IMR-90 (cell line): ENCODE measurements at regions of chr1 and their contacts with region 1.

Region 1: DNA sequence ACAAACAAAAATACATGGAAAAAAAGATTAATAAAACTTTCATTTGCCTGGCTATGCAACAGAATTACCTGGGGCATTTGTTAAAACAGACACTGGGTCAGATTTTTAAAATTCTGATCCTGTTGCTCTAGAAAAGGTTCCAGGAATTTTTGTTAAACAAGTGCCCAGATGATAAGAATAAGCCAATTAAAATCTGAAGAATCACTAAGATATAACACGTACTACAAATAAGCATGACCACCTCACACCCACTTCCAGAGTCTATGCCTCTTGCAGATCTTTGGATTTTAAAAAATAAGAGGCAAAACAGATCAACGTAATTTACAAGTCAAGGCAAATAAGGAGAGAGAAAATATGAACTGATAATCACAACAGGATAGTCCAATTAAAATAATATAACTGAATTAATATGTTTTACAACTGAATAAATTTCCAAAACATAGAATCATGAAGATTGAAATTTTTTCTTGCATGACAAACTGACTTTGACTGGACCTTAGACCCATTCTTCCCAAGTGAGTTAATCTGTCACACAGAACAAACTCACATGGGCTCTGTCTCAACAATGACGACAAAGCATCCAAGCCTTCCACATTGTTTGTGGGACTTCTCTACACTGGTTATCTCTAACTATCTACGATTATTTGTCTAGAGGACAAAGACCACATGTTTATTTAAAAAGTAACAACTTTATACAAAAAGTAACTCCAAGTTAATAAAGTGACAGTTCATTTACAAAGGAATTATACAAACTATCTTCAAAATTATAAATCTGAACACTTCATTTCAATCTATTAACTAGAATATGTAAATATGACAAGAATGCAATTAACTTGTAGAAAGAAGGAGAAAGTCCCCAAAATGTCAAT is 56.9 kb downstream of the COP1 start:
- DNase-seq: no peak
- ATAC-seq: no peak
- H3K4me3 ChIP-seq: no peak overlapping the region
- H3K27ac ChIP-seq: no peak overlapping the region
- H3K4me1 ChIP-seq: no peaks in the 10 kb centered on the region
- H3K27me3 ChIP-seq: no peaks in the 10 kb centered on the region
- CTCF ChIP-seq: no peak
- POLR2A ChIP-seq: no peak
- RAD21 ChIP-seq: no peak

Region 2: DNA sequence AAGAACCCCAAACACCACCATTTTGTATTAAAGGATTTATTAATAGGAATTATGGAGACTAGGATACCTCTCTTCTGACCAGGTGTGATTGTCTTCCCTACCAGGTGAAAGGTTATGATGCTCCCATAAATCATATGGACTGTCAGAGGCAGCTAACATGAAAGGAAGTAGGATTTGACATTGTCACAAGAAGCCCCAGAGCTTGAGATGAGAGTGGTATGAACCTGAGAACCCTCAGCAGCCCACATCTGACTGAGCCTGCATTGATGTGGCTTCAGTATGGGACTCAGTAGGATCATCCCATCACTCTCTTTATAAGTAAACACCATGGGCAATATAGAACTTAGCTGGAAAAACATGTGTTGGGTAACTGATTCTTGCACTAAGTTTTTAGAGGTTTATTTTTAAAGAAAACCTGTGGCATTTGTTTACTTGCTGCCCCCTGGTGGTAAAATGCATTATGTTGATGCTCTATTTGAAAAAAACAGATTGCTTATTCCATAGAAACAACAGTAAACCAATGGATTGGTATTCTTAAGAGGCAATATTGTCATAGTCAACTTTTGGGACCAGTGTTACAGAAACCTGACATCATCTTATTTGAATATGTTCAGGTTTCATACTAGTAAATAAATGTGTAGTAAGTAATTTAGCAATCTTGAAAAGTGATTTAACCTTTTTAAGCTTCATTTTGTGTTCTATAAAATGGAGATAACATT is 1167.0 kb before region 1 on chr1:
- CTCF ChIA-PET with region 1: no interaction called
- POLR2A ChIA-PET with region 1: no interaction called
- dilution Hi-C with region 1: no loop called
- in situ Hi-C with region 1: no loop called
- intact Hi-C with region 1: no loop called
- DNase-seq: peak; percentile 49
- ATAC-seq: peak; percentile 32
- H3K4me3 ChIP-seq: no peak overlapping the region
- H3K27ac ChIP-seq: no peak overlapping the region
- H3K4me1 ChIP-seq: no peaks in the 10 kb centered on the region
- H3K27me3 ChIP-seq: no peaks in the 10 kb centered on the region
- CTCF ChIP-seq: peak; percentile 62
- POLR2A ChIP-seq: no peak
- RAD21 ChIP-seq: peak; percentile 47

Region 3: GRCh38 chr1:176183618-176184017 is 33.4 kb after region 1 on chr1:
- CTCF ChIA-PET with region 1: no interaction called
- POLR2A ChIA-PET with region 1: no interaction called
- dilution Hi-C with region 1: no loop called
- in situ Hi-C with region 1: no loop called
- intact Hi-C with region 1: loop called (anchors 5 kb)
- DNase-seq: peak; percentile 60
- ATAC-seq: peak; percentile 82
- H3K4me3 ChIP-seq: no peak overlapping the region
- H3K27ac ChIP-seq: no peak overlapping the region
- H3K4me1 ChIP-seq: peaks cover 3% of the 10 kb centered on the region; the same call in 1 of the 2 replicates
- H3K27me3 ChIP-seq: no peaks in the 10 kb centered on the region
- CTCF ChIP-seq: no peak
- POLR2A ChIP-seq: no peak
- RAD21 ChIP-seq: no peak